Naive thymus-derived CD4-positive, alpha-beta T cell (primary cell): ENCODE measurements at regions of chr3 and their contacts with region 1.

Region 1: DNA sequence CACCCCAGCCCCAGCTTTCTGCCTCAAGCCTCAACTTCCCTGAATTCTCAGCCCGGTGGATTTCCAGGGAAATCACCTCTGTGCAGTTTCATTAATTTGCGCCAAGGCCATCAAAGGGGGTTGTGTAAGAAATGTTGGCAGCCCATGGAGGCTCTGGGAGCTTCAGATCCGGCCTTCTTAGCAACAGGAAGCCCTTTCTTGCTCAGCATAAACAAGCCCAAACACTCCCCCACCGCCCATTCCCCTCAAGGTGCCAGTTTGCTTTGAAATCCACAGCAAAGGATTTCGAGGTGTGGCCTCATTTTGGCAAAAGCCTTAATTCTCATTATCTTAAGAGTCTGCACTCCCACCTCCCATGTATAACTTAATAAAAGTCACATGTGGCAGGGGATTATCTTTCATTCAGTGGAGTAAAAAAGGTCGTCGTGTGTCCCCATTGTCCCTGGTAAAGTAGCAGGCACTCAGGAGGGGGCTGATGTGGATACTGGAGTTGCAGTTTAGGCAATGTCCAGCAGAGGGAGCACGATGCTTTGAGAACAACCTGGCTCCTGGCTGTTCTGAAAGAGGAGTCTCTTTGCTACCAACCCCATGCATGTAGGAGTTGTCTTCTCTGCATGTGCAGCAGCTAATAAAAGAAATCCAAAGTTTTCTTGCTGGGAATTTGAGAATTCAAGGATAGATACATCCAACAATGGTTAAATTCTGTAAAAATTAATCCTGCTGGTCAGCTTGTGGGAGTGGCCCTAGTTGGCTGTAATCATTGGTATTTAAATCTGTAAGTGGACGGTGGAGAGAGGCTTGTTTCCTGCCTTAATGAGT is 39.5 kb downstream of the EBLN2 start:
- DNase-seq: peak; percentile 36 to 74 (median 62)
- ATAC-seq: peak; percentile 86
- H3K4me3 ChIP-seq: no peak overlapping the region
- H3K4me3 Mint-ChIP-seq: no peak overlapping the region
- H3K27ac ChIP-seq: no peak overlapping the region
- H3K27ac Mint-ChIP-seq: peak overlapping the region in 1 of 9 donors; percentile 23
- H3K4me1 ChIP-seq: no peaks in the 10 kb centered on the region
- H3K4me1 Mint-ChIP-seq: peaks cover 0 to 6% (median 0%) of the 10 kb centered on the region in 7 donors
- H3K27me3 ChIP-seq: peaks cover 0 to 3% of the 10 kb centered on the region in 2 donors
- H3K27me3 Mint-ChIP-seq: peaks cover 0 to 9% (median 4%) of the 10 kb centered on the region in 5 donors

Region 2: DNA sequence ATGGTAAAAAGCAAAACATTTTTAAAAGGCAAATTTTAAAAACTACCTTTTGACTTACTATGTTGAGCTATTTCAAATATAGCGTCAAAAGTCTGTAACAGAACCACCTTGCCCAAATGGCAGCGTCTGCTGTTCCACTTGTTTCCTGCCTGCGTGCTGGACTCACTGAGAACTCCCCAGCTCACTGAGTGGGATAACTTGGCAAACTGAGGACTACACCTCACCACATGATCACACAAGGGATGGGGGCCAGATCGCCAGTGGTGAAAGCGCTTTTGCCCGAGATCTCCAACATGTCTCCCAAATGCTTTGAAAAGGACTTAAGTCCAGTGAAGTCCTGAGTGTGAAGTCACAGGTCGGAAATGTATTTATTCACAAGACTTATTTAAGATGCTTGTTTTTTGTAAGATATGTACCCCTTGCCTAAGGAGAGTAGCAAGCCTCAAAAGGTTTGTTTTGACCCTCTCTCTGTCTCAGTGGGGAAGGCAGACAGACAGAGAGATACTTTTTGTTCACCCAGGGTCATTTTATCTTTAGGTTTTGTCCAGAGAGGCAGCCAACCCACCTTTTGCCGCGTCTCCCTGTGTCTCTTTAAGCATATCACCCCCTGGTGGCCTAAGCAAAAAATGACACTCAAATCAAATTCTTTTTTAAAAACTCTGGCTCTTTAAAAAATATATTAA is 331.2 kb after region 1 on chr3:
- CTCF ChIA-PET with region 1: no interaction called
- POLR2A ChIA-PET with region 1: no interaction called
- intact Hi-C with region 1: loop called in 1 of 2 experiments (anchors 1 kb)
- DNase-seq: peak in 1 of 9 donors; percentile 7
- ATAC-seq: no peak
- H3K4me3 ChIP-seq: no peak overlapping the region
- H3K4me3 Mint-ChIP-seq: no peak overlapping the region
- H3K27ac ChIP-seq: no peak overlapping the region
- H3K27ac Mint-ChIP-seq: no peak overlapping the region
- H3K4me1 ChIP-seq: no peaks in the 10 kb centered on the region
- H3K4me1 Mint-ChIP-seq: no peaks in the 10 kb centered on the region
- H3K27me3 ChIP-seq: no peaks in the 10 kb centered on the region
- H3K27me3 Mint-ChIP-seq: peaks cover 0 to 27% (median 9%) of the 10 kb centered on the region in 5 donors